GM10248 (cell line): ENCODE measurements at regions of chr17 and their contacts with region 1.

Region 1: DNA sequence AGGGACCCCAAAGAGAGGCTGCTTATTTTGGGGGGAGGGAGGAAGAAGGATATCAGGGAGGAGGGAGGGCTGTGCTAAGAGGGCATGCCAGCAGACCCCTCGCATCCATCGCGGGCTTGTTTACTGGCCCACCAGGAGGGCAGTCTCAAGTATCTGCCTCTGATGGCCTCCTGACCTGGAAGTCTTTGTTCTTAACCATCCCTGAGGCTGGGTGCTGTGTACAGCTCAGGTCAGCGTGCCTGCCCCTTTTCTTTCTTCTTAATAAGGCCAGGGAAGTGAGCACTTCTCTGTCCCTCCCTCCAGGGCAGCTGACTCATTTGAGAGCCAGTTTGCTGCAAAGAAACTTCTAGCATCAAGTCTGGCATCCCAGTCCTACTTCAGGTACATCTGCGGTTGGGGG is 157.0 kb downstream of the CCDC182 start:
- DNase-seq: no peak
- CTCF ChIP-seq: no peak

Region 2: GRCh38 chr17:57577751-57578607 is 10.1 kb before region 1 on chr17:
- CTCF ChIA-PET with region 1: interaction called, 10 read pairs
- POLR2A ChIA-PET with region 1: no interaction called
- DNase-seq: no peak
- CTCF ChIP-seq: no peak